Esophagus muscularis mucosa (tissue), 4 donors: ENCODE measurements at regions of chr15 and their contacts with region 1.

Region 1: GRCh38 chr15:67863442-67863987 is 23.7 kb upstream of the RNU6-1 start:
- DNase-seq: no peak
- H3K4me3 ChIP-seq: peak overlapping the region; percentile 46 to 58 (median 52)
- H3K27ac ChIP-seq: peak overlapping the region; percentile 59 to 73 (median 69)
- H3K4me1 ChIP-seq: peaks cover 11 to 26% (median 17%) of the 10 kb centered on the region in 4 donors
- H3K27me3 ChIP-seq: peaks cover 0 to 5% (median 0%) of the 10 kb centered on the region in 4 donors
- CTCF ChIP-seq: peak; percentile 94 to 99 (median 98)
- EP300 ChIP-seq: no peak
- POLR2A ChIP-seq: no peak

Region 2: DNA sequence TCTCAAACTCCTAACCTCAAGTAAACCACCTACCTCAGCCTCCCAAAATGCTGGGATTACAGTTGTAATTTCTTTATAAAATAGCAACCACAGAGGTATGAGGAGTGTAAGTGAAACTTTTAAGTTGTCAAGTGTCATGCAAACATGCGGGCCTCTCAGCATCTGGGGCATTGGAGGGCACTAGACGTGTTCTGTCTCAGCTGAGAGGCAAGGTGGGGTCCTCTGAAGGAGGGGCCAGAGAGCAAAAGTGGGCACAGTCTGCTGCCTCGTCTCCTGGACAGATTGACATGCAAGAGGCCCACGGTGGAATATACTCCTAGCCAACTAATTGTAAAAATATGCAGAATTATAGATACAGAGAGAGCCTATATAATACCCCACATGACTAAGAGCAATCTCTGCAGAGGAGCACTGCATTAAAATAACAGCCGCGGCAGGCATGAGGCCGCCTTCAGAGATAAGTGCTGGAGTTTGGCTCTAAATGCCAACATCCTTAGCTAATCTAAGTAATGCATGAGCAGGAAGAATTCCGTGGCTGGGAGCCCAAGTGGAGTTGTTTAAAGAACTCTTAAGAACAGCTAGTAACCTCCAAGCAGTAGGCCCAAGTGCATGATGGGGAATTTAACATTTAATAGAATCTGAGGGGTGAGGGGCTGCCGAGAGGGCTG is 64.1 kb after region 1 on chr15:
- intact Hi-C with region 1: no loop called
- DNase-seq: peak; percentile 93
- H3K4me3 ChIP-seq: no peak overlapping the region
- H3K27ac ChIP-seq: peak overlapping the region; percentile 66 to 77 (median 75)
- H3K4me1 ChIP-seq: peaks cover 27 to 53% (median 38%) of the 10 kb centered on the region in 4 donors
- H3K27me3 ChIP-seq: no peaks in the 10 kb centered on the region
- CTCF ChIP-seq: no peak
- EP300 ChIP-seq: no peak
- POLR2A ChIP-seq: no peak

Region 3: GRCh38 chr15:67967871-67968431 is 104.4 kb after region 1 on chr15:
- intact Hi-C with region 1: loop called (anchors 5 kb)
- DNase-seq: no peak
- H3K4me3 ChIP-seq: peak overlapping the region; percentile 47 to 52 (median 49)
- H3K27ac ChIP-seq: peak overlapping the region; percentile 38 to 75 (median 48)
- H3K4me1 ChIP-seq: peaks cover 4 to 20% (median 19%) of the 10 kb centered on the region in 4 donors
- H3K27me3 ChIP-seq: no peaks in the 10 kb centered on the region
- CTCF ChIP-seq: peak in 1 of 3 experiments; percentile 5
- EP300 ChIP-seq: no peak
- POLR2A ChIP-seq: no peak

Region 4: DNA sequence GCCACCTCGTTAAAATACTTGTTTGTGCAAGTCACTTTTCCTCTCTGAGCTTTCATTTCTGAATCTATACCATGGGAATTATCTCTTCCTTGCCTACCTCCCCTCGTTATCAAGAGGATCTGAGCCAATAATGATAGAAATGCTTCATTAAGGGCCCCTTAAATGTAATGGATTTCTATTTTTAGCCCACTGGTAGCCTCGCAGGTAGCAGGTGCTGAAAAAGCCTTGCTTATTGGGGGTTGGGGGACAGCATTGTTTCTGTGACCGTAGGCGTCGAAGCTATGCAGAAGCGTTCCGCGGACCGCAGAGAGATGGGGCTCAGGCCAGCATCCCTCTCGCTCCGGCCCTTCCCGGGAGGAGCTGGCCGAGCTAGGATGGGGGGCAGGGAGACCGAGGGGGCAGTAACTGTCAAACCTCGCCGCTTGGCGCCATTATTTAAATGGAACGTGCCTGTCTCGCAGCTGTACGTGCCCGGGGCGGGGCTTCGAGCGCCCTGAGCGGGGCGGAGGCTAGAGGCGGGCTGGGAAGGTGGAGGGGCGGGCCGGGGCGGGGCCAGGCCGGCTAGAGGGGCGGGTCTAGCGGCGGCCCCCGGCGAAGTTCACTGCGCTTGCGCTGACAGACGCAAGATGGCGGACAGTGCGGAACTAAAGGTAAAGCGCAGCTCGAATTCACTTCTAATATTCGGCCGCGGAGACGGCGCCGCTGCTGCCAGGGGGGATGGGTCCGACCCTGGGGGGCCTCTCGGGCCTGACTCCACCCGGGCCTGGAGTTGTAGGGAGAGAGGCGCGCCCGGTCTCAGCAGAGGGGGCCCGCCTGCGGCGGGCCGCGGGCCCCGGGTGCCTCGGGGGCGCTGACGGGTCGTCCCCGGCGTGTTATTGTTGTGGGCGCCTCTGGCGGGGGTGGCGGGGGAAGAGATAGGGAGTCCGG is 190.4 kb after region 1 on chr15 and contains the start of gene PIAS1:
- intact Hi-C with region 1: loop called (anchors 5 kb)
- DNase-seq: peak; percentile 96
- H3K4me3 ChIP-seq: peak within 1 kb of the TSS; percentile 93 to 100 (median 98)
- H3K27ac ChIP-seq: peak within 1 kb of the TSS; percentile 94 to 98 (median 95)
- H3K4me1 ChIP-seq: peaks cover 29 to 42% (median 36%) of the 10 kb centered on the region in 4 donors
- H3K27me3 ChIP-seq: no peaks in the 10 kb centered on the region
- CTCF ChIP-seq: no peak
- EP300 ChIP-seq: no peak
- POLR2A ChIP-seq: peak; percentile 85
- total RNA-seq, gene PIAS1: 26.2 to 68.4 (median 53.1) TPM

Region 5: DNA sequence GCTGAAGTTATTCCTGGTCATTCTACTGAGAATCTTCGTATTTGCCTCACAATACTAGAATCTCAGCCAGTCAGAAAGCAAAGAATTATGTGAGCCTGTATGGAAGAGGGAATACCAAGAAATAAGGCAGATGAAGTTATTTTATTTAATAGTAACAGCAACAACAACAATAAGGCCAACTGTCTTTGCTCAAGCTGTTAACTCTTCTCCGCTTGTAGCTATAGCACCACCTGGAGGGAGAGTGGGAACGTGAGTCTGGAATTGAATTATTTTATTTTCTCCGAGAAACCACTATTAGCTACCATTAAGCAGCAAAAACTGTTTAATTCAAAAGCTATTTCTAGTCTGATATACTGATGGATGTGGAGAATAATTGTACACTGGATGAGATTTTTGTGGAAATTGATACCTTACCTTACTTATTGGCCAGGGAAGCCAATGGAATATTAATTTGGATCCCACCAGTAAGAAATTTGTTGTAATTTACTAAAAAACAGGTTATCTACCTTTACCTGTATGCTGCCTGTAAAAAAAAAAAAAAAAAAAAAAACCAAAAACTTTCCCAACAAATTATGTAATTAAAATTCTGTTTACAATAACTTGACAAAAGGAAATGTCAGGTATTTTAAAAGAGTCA is 291.5 kb after region 1 on chr15:
- intact Hi-C with region 1: loop called (anchors 5 kb)
- DNase-seq: no peak
- H3K4me3 ChIP-seq: no peak overlapping the region
- H3K27ac ChIP-seq: peak overlapping the region in 1 of 4 donors; percentile 67
- H3K4me1 ChIP-seq: peaks cover 17 to 72% (median 61%) of the 10 kb centered on the region in 4 donors
- H3K27me3 ChIP-seq: no peaks in the 10 kb centered on the region
- CTCF ChIP-seq: peak; percentile 78 to 83 (median 80)
- EP300 ChIP-seq: no peak
- POLR2A ChIP-seq: no peak

Region 6: DNA sequence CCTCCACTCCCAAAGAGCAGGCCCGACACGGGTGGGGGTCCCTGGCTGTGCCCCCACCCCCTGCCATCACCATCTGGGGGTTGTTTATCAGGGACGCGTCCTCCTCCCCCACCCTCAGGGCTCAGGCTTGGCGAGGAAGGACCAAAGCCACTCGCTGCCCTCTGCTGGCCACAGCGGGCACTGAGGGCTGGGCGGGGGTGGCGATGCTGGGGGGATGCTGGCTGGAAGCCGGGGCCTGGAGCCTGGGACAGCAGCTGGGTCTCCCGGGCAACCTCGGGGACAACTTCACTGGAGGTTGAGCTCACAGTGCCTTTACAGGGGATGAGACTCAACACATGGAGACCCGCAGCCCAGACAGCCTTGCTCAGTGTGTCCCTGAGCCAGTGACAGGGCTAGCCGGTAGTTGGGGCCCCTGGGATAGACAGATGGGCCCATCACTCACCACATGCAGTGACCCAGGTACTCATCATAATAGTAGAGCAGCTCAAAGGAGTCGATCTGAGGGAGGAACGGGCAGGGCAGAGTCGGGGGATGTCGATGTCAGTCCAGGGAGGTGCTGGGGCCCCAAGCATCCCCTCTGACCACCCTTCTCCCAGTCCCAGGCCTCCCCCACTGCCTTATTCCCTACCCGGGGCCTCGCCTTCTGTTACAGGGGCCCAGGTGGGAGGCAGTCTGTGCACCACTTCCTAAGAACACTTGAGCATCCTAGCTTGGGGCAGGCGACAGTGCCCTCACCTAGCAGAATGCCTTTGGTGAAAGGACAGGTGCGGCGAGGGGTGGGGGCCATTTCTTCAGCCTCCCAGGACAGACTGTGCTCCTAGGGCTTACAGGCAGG is 347.5 kb after region 1 on chr15:
- intact Hi-C with region 1: loop called (anchors 2 kb)
- DNase-seq: no peak
- H3K4me3 ChIP-seq: peak overlapping the region; percentile 24 to 54 (median 38)
- H3K27ac ChIP-seq: peak overlapping the region in 2 of 4 donors; percentile 18 to 71
- H3K4me1 ChIP-seq: peaks cover 14 to 33% (median 25%) of the 10 kb centered on the region in 4 donors
- H3K27me3 ChIP-seq: no peaks in the 10 kb centered on the region
- CTCF ChIP-seq: peak; percentile 93 to 98 (median 95)
- EP300 ChIP-seq: no peak
- POLR2A ChIP-seq: no peak